Right ventricle myocardium inferior (tissue), 1 donor: ENCODE measurements at regions of chr3 and their contacts with region 1.

Region 1: DNA sequence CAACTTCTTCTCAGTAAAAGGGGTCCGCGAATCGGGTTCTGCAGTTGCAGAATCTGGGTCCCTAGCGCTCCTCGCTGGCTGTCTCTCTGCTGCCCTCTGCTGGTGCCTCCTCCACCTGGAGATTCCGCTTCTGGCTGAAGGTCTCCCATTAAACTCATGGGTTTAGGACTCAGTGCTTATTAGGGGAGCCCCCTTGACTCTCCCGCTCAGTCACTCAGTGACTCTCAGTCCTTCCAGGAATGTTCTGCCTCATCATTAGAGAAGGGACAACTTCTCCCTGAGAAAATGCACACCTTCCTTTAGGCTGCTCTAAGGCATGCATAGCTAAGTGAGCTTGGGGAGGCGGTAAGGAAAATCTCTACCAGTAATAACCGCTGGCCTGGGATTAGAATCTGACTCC is 7.1 kb downstream of the CPN2 start:
- DNase-seq: no peak
- ATAC-seq: peak; percentile 72

Region 2: DNA sequence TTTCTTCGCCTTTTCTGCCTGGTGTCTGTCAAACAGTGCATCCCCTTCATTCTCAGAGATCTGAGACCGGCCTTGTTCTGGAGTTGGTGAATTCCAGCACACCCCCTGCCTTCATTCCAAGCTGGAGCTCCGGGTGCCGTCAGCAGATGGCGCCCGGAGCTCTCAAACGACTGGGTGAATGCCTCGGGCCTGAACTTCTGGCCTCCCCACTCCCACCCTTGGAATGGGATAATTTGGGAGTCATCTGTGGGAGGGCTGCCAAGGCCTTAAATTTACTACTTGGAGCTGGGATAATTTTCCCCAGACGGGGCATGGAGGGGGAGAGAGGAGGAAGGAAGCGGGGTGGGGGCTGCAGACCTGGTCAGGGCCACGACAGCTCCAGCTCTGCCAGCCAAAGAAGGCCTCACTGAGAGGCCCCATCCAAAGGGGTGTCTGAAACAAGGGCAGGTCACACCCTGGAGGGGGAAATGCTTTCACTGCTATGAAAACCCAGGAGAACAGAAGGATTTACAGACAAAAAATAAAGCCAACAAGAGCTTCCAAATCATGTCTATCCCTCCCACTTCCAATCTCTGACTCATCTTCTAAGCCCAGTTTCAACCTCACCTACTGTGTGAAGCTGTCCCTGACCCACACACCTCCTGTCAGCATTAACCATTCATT is 563.1 kb before region 1 on chr3:
- intact Hi-C with region 1: loop called (anchors 1 kb)
- DNase-seq: peak; percentile 83
- ATAC-seq: peak; percentile 92

Region 3: GRCh38 chr3:194285024-194285849 is 58.8 kb before region 1 on chr3:
- intact Hi-C with region 1: no loop called
- DNase-seq: no peak
- ATAC-seq: no peak